ENCODE measurements at regions of chr19 and their contacts with region 1.

Region 1: GRCh38 chr19:13012690-13013608 is 17.7 kb downstream of the NFIX start:
- DNase-seq: peak; percentile 68
- H3K4me3 Mint-ChIP-seq: peak overlapping the region; percentile 71
- H3K27ac Mint-ChIP-seq: peak overlapping the region; percentile 89
- H3K4me1 Mint-ChIP-seq: peaks cover 38% of the 10 kb centered on the region
- H3K27me3 Mint-ChIP-seq: no peaks in the 10 kb centered on the region
- CTCF ChIP-seq: no peak

Region 2: DNA sequence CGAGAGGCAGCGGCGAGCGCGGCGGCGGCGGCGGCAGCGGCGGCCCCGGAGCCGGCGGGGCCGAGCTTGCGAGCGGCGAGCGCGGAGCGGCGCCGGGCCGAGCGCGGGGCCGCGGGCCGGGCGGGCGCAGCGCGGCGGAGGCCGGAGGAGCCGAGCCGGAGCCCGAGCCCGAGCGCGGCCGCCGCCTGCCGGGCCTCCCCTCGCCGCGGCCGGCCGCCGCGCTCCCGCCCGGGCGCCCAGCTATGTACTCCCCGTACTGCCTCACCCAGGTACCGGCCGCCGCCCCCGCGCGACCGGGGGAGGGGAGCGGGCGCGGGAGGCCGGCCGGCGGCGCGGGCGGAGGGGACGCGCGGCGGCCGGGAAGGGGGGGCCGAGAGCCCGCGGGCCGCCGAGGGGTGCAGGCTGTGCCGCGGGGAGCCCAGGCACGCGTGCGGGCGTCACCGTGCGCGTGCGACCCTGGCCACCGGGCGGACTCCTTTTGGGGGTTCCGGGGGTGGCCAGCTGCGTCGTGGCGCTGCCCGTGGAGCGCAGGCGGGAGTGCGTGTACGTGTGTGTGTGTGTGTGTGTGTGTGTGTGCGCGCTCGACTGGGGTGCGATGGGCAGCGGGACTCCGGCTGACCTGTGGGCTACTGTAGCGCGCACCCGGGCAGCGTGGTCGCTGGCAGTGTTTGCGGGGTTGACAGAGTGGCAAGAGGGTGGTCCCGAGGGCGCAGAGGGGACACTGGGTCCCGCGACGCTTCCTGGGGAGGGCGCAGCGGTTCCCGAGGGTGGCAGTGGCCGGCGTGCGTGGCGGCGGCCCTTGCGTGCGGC is 17.1 kb before region 1 on chr19:
- CTCF ChIA-PET with region 1: interaction called, 6 read pairs
- POLR2A ChIA-PET with region 1: interaction called, 11 read pairs
- intact Hi-C with region 1: no loop called
- DNase-seq: no peak
- H3K4me3 Mint-ChIP-seq: peak overlapping the region; percentile 74
- H3K27ac Mint-ChIP-seq: peak overlapping the region; percentile 84
- H3K4me1 Mint-ChIP-seq: peaks cover 16% of the 10 kb centered on the region
- H3K27me3 Mint-ChIP-seq: no peaks in the 10 kb centered on the region
- CTCF ChIP-seq: no peak

Region 3: DNA sequence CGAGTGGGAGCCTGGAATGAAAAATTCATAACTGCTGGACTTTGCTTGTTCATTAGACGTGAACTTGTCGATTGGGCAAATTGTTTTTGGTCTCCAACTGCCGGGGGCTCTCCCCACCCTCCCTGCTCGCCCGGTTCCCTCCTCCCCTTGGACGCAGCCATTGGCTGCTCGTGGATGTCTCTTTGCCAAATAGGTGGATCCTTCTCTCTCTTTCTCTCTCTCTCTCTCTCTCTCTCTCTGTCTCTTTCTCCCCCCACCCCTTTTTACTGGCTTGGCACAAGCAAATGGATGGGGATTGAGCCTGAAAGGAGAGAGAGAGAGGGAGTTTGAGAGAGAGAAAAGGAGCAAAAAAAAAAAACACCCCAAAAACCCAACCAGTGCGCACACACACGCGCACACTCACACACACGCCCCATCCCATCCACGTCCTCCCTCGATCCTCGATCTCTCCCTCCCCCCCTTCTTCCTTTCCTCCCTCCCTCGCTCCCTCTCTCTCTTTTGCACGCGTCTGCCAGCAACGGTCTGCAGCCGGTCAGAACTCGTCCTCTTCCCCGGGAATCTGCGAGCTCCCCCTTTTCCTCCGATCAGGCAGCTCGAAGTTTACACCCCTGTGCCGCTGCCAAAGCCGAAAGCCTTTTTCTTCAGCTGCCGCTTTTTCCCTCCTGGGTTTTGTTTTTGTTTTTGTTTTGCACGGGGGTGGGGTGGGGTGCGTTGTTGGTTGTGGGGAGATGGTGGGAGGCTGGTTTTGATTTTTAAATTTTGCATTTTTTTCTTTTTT is 10.1 kb after region 1 on chr19:
- CTCF ChIA-PET with region 1: interaction called, 4 read pairs
- POLR2A ChIA-PET with region 1: interaction called, 45 read pairs
- intact Hi-C with region 1: no loop called
- DNase-seq: peak; percentile 94
- H3K4me3 Mint-ChIP-seq: peak overlapping the region; percentile 69
- H3K27ac Mint-ChIP-seq: peak overlapping the region; percentile 69
- H3K4me1 Mint-ChIP-seq: peaks cover 48% of the 10 kb centered on the region
- H3K27me3 Mint-ChIP-seq: no peaks in the 10 kb centered on the region
- CTCF ChIP-seq: no peak

Region 4: DNA sequence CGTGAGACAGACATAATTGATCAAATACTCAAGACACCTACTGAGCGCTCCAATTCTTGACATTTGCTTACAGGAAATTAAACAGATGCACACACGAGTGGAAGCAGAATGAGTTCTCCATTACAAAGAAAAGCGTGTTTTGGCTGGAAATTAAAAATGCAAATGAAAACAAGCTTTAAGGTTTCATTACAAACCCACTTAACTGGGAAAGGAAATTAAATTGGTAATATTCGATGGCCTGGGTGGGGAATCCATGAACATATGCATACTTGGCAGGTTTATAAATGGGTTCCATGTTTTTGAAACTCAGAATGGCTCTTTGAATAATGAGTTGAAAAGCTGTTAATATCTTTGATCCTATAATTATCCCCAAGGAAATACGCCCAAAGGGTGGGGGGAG is 315.3 kb after region 1 on chr19:
- CTCF ChIA-PET with region 1: no interaction called
- POLR2A ChIA-PET with region 1: no interaction called
- intact Hi-C with region 1: no loop called
- DNase-seq: no peak
- H3K4me3 Mint-ChIP-seq: no peak overlapping the region
- H3K27ac Mint-ChIP-seq: no peak overlapping the region
- H3K4me1 Mint-ChIP-seq: no peaks in the 10 kb centered on the region
- H3K27me3 Mint-ChIP-seq: peaks cover 44% of the 10 kb centered on the region
- CTCF ChIP-seq: no peak